Activated T-helper 2 cell treated with anti-CD3 and anti-CD28 coated beads, Interferon-gamma antibody, Interleukin-2, Interleukin-4, amounts not matched to agents 10 μg/mL and 5 μg/mL and 100 μg/mL, durations not matched to agents 14 hours and 24 hours and 36 hours (primary cell): ENCODE measurements at regions of chr1 and their contacts with region 1.

Region 1: GRCh38 chr1:52544665-52545525 is 8.0 kb downstream of the TUT4 start:
- DNase-seq: no peak
- H3K4me3 Mint-ChIP-seq: no peak overlapping the region
- H3K27ac Mint-ChIP-seq: no peak overlapping the region
- H3K4me1 Mint-ChIP-seq: peaks cover 18% of the 10 kb centered on the region
- H3K27me3 Mint-ChIP-seq: no peaks in the 10 kb centered on the region

Region 2: DNA sequence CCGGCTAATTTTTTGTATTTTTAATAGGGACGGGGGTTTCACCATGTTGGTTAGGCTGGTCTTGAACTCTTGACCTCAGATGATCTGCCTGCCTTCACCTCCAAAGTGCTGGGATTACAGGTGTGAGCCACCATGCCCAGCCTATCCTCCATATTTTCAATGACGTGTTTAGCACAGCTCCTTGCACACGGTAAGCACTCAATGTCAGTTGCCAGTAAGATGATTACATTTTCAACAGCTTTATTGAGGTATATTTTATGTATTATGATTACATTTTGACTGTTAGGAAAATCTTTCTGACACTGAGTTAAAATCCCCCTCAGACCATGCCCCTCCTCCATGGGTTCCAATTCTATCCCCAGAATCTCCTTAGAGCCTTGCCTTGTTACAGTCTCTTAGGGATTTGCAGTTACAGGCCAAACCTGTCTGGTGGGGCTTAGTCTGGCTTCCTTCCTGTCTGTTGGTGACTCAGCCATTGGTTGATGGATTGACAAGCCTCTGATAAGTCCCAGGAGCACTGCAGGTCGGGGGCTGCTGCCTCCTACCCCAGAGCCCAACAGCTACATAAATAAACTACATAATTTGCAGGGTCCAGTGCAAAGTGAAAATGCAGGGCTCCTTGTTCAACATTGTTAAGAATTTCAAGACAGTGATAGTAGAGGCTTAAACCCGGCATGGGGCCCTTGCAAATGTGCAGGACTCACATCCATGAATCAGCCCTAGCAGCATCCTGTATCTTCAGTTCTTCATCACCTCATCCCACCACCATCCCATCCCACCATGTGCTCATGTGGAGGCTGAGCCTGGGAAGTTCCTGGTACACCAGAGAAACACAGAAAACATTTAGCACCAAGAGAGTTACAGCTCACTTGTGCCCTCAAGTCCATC is 129.8 kb after region 1 on chr1:
- intact Hi-C with region 1: loop called (anchors 5 kb)
- DNase-seq: no peak
- H3K4me3 Mint-ChIP-seq: no peak overlapping the region
- H3K27ac Mint-ChIP-seq: peak overlapping the region; percentile 43
- H3K4me1 Mint-ChIP-seq: peaks cover 12% of the 10 kb centered on the region
- H3K27me3 Mint-ChIP-seq: no peaks in the 10 kb centered on the region